ENCODE measurements at regions of chr7 and their contacts with region 1.

Region 1: DNA sequence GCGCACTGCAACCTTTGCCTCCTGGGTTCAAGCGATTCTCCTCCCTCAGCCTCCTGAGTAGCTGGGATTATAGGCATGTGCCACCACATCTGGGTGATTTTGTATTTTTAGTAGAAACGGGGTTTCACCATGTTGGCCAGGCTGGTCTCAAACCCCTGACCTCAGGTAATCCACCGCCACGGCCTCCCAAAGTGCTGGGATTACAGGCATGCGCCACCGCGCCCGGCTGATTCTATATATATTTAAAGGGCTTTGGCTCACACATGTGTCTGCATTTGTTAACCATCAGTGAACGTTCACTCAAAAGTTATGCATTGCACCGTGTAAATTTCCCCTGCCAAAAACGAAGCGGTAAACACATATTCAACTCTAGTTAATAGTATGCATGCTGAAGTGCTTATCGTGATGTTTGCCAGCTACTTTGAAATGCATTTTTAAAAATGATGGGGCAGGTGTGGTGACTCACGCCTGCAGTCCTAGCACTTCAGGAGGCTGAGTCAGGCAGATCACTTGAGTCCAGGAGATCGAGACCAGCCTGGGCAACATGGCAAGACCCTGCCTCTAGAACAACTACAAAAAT is 17.7 kb upstream of the WIPI2 start:
- DNase-seq: no peak
- ATAC-seq: no peak
- H3K4me3 ChIP-seq: no peak overlapping the region
- H3K27ac ChIP-seq: no peak overlapping the region
- H3K4me1 ChIP-seq: no peaks in the 10 kb centered on the region
- CTCF ChIP-seq: no peak
- EP300 ChIP-seq: no peak
- POLR2A ChIP-seq: no peak
- RAD21 ChIP-seq: no peak

Region 2: DNA sequence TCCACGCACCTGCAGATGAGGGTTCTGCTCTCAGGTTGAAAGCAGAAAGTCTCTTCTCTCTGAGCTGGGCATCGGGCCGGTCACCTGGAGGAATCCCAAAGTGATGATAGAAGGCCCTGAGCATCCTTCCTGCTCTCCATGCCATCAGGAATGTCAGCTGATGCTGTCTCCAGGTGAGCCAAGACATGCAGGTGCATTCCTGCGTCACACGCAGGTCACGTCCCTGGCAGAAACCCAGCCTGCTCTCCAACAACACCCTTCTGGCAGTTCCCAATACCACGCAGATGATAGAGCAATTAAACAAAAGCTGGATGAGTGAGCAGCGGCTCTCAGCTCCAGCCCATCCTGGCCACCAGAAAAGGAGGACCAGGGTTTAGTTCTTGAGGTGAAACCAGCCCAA is 10.9 kb after region 1 on chr7:
- CTCF ChIA-PET with region 1: interaction called, 13 read pairs
- POLR2A ChIA-PET with region 1: no interaction called
- DNase-seq: no peak
- ATAC-seq: no peak
- H3K4me3 ChIP-seq: no peak overlapping the region
- H3K27ac ChIP-seq: no peak overlapping the region
- H3K4me1 ChIP-seq: no peaks in the 10 kb centered on the region
- CTCF ChIP-seq: no peak
- EP300 ChIP-seq: no peak
- POLR2A ChIP-seq: no peak
- RAD21 ChIP-seq: no peak

Region 3: DNA sequence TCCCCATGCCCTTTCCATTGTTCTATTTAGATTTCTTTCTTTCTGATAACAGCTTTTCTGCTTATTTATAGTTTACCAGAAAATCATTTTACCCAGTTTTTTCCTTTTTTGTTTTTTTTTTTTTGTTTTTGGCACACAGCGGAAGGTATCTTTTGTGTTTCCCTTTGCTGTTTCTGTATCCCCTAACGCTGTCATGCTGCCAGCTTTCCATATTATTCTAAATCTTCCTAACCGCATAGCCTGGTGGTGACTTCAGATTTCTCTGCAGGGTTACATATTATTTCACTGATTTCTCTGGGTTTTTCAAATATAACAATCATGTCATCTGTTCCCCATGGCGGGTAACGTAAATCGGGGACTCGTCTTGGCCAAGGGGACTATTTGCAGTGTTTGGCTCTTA is 106.5 kb after region 1 on chr7:
- CTCF ChIA-PET with region 1: no interaction called
- POLR2A ChIA-PET with region 1: no interaction called
- DNase-seq: no peak
- ATAC-seq: no peak
- H3K4me3 ChIP-seq: no peak overlapping the region
- H3K27ac ChIP-seq: no peak overlapping the region
- H3K4me1 ChIP-seq: peaks cover under 1% of the 10 kb centered on the region; the same call in 1 of the 3 replicates
- CTCF ChIP-seq: no peak
- EP300 ChIP-seq: no peak
- POLR2A ChIP-seq: no peak
- RAD21 ChIP-seq: no peak